CD8-positive, alpha-beta T cell (primary cell): ENCODE measurements at regions of chr1 and their contacts with region 1.

Region 1: DNA sequence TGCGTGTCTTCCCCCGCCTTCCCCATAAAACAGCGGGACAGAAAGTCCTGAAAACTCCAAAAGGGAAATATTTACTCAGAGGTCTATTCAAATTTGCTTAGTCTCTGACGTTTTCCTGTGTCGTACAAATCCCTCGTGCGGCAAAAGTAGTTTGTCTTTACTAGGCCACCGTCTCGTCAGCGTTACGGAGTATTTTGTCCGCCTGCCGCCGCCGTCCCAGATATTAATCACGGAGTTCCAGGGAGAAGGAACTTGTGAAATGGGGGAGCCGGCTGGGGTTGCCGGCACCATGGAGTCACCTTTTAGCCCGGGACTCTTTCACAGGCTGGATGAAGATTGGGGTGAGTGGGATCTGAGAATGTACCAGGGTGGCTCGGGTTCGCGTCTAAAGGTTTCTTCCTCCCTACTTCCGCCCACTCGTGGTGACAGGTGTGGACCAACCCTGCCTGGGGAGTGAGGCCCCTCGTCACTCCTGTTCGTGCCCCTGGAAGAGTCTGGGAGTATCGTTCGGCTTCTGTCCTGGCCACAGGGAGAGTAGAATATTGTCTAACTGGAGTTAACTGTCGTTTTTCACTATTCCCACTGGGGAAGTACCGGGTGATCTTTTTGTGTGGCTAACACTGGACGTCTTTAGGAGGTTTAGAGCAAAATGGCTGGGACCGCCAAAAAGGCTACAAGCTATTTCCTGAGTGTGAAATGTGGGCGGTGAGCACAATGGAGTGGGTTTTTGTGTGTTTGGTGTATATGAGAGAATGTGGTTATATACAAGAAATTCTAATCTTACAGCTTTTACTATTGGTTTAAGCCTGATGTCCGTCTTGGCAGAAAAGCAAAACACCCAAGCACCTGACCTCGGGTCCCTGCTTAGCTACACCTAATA is at the start of gene ATF6:
- DNase-seq: peak; percentile 61 to 92 (median 79)
- ATAC-seq: peak; percentile 79
- H3K4me3 ChIP-seq: peak within 1 kb of the TSS; percentile 73 to 83
- H3K4me3 Mint-ChIP-seq: peak within 1 kb of the TSS; percentile 93
- H3K27ac ChIP-seq: peak within 1 kb of the TSS; percentile 84 to 89
- H3K27ac Mint-ChIP-seq: peak within 1 kb of the TSS; percentile 95
- H3K4me1 ChIP-seq: peaks cover 45% of the 10 kb centered on the region
- H3K4me1 Mint-ChIP-seq: peaks cover 37% of the 10 kb centered on the region
- H3K27me3 ChIP-seq: no peaks in the 10 kb centered on the region
- H3K27me3 Mint-ChIP-seq: no peaks in the 10 kb centered on the region
- CTCF ChIP-seq: no peak
- total RNA-seq, gene ATF6: 10.5 to 11.6 TPM

Region 2: GRCh38 chr1:161749509-161750407 is 16.6 kb before region 1 on chr1 and contains the start of gene DUSP12:
- CTCF ChIA-PET with region 1: interaction called, 13 read pairs
- POLR2A ChIA-PET with region 1: interaction called, 4 read pairs
- intact Hi-C with region 1: loop called in 1 of 2 experiments (anchors 1 kb)
- DNase-seq: peak; percentile 70 to 92 (median 85)
- ATAC-seq: peak; percentile 95
- H3K4me3 ChIP-seq: peak within 1 kb of the TSS; percentile 88 to 99
- H3K4me3 Mint-ChIP-seq: peak within 1 kb of the TSS; percentile 100
- H3K27ac ChIP-seq: peak within 1 kb of the TSS; percentile 68 to 76
- H3K27ac Mint-ChIP-seq: peak within 1 kb of the TSS; percentile 96
- H3K4me1 ChIP-seq: peaks cover 23% of the 10 kb centered on the region
- H3K4me1 Mint-ChIP-seq: peaks cover 41% of the 10 kb centered on the region
- H3K27me3 ChIP-seq: no peaks in the 10 kb centered on the region
- H3K27me3 Mint-ChIP-seq: peaks cover 6% of the 10 kb centered on the region
- CTCF ChIP-seq: no peak
- total RNA-seq, gene DUSP12: 27.9 to 31.1 TPM

Region 3: GRCh38 chr1:162035241-162035640 is 268.9 kb after region 1 on chr1:
- CTCF ChIA-PET with region 1: interaction called, 24 read pairs
- POLR2A ChIA-PET with region 1: no interaction called
- intact Hi-C with region 1: loop called (anchors 1 kb)
- DNase-seq: no peak
- ATAC-seq: no peak
- H3K4me3 ChIP-seq: no peak overlapping the region
- H3K4me3 Mint-ChIP-seq: no peak overlapping the region
- H3K27ac ChIP-seq: no peak overlapping the region
- H3K27ac Mint-ChIP-seq: no peak overlapping the region
- H3K4me1 ChIP-seq: no peaks in the 10 kb centered on the region
- H3K4me1 Mint-ChIP-seq: peaks cover 4% of the 10 kb centered on the region
- H3K27me3 ChIP-seq: no peaks in the 10 kb centered on the region
- H3K27me3 Mint-ChIP-seq: peaks cover 11% of the 10 kb centered on the region
- CTCF ChIP-seq: no peak

Region 4: GRCh38 chr1:162040681-162041080 is 274.3 kb after region 1 on chr1:
- CTCF ChIA-PET with region 1: interaction called, 24 read pairs
- POLR2A ChIA-PET with region 1: no interaction called
- intact Hi-C with region 1: loop called (anchors 1 kb)
- DNase-seq: no peak
- ATAC-seq: no peak
- H3K4me3 ChIP-seq: no peak overlapping the region
- H3K4me3 Mint-ChIP-seq: no peak overlapping the region
- H3K27ac ChIP-seq: no peak overlapping the region
- H3K27ac Mint-ChIP-seq: no peak overlapping the region
- H3K4me1 ChIP-seq: no peaks in the 10 kb centered on the region
- H3K4me1 Mint-ChIP-seq: peaks cover 2% of the 10 kb centered on the region
- H3K27me3 ChIP-seq: no peaks in the 10 kb centered on the region
- H3K27me3 Mint-ChIP-seq: peaks cover 17% of the 10 kb centered on the region
- CTCF ChIP-seq: no peak

Region 5: DNA sequence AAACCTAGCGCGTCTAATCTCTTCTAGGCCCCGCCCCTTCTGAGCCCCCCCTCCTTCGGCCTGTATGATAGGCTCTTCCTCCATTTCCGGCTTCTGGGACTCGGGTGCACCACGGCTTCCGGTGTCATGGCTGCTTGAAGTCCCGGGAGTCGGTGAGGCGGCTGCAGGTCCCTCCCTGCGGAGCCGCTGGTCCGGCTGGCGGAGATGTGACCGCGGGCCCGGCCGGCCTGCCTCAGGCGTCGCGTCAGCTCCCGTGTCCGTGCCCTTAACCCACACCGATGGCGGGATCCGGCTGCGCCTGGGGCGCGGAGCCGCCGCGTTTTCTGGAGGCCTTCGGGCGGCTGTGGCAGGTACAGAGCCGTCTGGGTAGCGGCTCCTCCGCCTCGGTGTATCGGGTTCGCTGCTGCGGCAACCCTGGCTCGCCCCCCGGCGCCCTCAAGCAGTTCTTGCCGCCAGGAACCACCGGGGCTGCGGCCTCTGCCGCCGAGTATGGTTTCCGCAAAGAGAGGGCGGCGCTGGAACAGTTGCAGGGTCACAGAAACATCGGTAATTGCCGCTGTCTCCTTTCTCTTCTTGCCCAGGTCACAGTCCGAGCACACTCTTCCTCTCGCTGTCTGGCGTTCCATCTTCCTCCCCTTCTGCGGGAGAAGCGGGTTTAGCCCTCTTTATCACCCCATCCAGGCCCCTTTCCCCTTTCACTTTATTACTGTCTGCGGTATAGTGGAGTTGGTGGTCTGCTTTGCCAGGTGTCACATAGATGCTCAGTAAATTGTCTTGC is 731.6 kb after region 1 on chr1 and contains the start of gene UHMK1:
- CTCF ChIA-PET with region 1: no interaction called
- POLR2A ChIA-PET with region 1: no interaction called
- intact Hi-C with region 1: loop called in 1 of 2 experiments (anchors 5 kb)
- DNase-seq: peak; percentile 79 to 95 (median 88)
- ATAC-seq: peak; percentile 97
- H3K4me3 ChIP-seq: peak within 1 kb of the TSS; percentile 73 to 92
- H3K4me3 Mint-ChIP-seq: peak within 1 kb of the TSS; percentile 89
- H3K27ac ChIP-seq: peak within 1 kb of the TSS; percentile 84 to 93
- H3K27ac Mint-ChIP-seq: peak within 1 kb of the TSS; percentile 96
- H3K4me1 ChIP-seq: peaks cover 35% of the 10 kb centered on the region
- H3K4me1 Mint-ChIP-seq: peaks cover 43% of the 10 kb centered on the region
- H3K27me3 ChIP-seq: no peaks in the 10 kb centered on the region
- H3K27me3 Mint-ChIP-seq: no peaks in the 10 kb centered on the region
- CTCF ChIP-seq: no peak
- total RNA-seq, gene UHMK1: 50.5 to 50.9 TPM

Region 6: GRCh38 chr1:163321311-163322305 is 1555.3 kb after region 1 on chr1 and contains the start of gene NUF2:
- CTCF ChIA-PET with region 1: no interaction called
- POLR2A ChIA-PET with region 1: no interaction called
- intact Hi-C with region 1: loop called in 1 of 2 experiments (anchors 5 kb)
- DNase-seq: peak; percentile 94 to 98 (median 96)
- ATAC-seq: peak; percentile 97
- H3K4me3 ChIP-seq: peak within 1 kb of the TSS; percentile 58 to 80
- H3K4me3 Mint-ChIP-seq: peak within 1 kb of the TSS; percentile 96
- H3K27ac ChIP-seq: peak within 1 kb of the TSS; percentile 49 to 81
- H3K27ac Mint-ChIP-seq: peak within 1 kb of the TSS; percentile 98
- H3K4me1 ChIP-seq: peaks cover 16% of the 10 kb centered on the region
- H3K4me1 Mint-ChIP-seq: peaks cover 24% of the 10 kb centered on the region
- H3K27me3 ChIP-seq: no peaks in the 10 kb centered on the region
- H3K27me3 Mint-ChIP-seq: no peaks in the 10 kb centered on the region
- CTCF ChIP-seq: no peak
- total RNA-seq, gene NUF2: 1.2 to 2.5 TPM